ENCODE measurements at regions of chr3 and their contacts with region 1.

Region 1: GRCh38 chr3:16012086-16012485 is 162.4 kb upstream of the GALNT15 start:
- DNase-seq: no peak
- H3K4me3 ChIP-seq: no peak overlapping the region
- H3K27ac ChIP-seq: no peak overlapping the region
- H3K4me1 ChIP-seq: no peaks in the 10 kb centered on the region
- H3K27me3 ChIP-seq: no peaks in the 10 kb centered on the region
- CTCF ChIP-seq: no peak

Region 2: GRCh38 chr3:16040991-16041390 is 28.9 kb after region 1 on chr3:
- intact Hi-C with region 1: loop called (anchors 1 kb)
- DNase-seq: no peak
- H3K4me3 ChIP-seq: no peak overlapping the region
- H3K27ac ChIP-seq: no peak overlapping the region
- H3K4me1 ChIP-seq: no peaks in the 10 kb centered on the region
- H3K27me3 ChIP-seq: no peaks in the 10 kb centered on the region
- CTCF ChIP-seq: no peak

Measured in tibial artery (tissue), 4 donors.